ENCODE measurements at regions of chr7 and their contacts with region 1.

Region 1: DNA sequence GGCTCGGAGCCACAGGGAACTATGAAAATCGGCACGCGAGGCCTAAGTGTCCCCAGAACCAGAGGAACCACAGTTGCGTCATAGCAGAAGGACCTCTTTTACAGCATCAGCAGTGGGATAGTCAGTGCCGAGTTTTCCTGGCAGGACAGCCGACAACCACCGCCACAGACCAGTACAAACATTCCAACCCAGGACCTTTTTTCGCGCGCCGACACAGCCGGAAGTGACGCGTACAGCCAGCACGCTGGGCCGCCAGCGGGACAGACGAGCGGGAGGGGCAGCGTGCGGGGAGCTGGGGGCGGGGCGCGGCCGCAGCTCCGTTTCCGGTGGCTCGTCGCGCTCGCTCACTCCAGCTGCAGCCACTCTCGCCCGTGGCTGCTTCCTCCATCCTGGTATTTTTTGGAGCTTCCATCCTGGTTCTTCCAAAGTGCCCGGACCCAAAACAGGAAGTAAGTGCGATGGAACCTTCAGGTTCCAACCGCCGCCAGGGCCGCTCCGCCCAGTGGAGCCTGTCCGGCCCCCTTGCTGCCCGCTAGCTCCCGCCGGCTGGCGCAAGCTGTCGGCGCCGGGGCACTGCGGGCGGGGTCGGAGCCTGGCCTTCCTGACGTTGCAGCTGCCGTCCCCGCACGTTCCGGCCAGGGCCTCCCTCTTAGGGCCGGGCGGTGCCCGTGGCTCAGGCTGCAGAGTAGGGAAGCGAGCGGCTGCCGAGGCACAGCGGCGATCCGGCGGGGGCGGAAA is at the start of gene DMTF1:
- DNase-seq: peak; percentile 92
- H3K4me3 Mint-ChIP-seq: peak within 1 kb of the TSS; percentile 91
- H3K27ac Mint-ChIP-seq: peak within 1 kb of the TSS; percentile 96
- H3K4me1 Mint-ChIP-seq: peaks cover 42% of the 10 kb centered on the region
- H3K27me3 Mint-ChIP-seq: no peaks in the 10 kb centered on the region
- total RNA-seq, gene DMTF1: 62.7 to 71.1 TPM

Region 2: GRCh38 chr7:86926732-86927131 is 225.5 kb before region 1 on chr7:
- CTCF ChIA-PET with region 1: interaction called, 56 read pairs
- POLR2A ChIA-PET with region 1: no interaction called
- intact Hi-C with region 1: loop called (anchors 2 kb)
- DNase-seq: no peak
- H3K4me3 Mint-ChIP-seq: no peak overlapping the region
- H3K27ac Mint-ChIP-seq: no peak overlapping the region
- H3K4me1 Mint-ChIP-seq: peaks cover 4% of the 10 kb centered on the region
- H3K27me3 Mint-ChIP-seq: no peaks in the 10 kb centered on the region

Region 3: GRCh38 chr7:86978808-86979506 is 173.3 kb before region 1 on chr7:
- CTCF ChIA-PET with region 1: interaction called, 4 read pairs
- POLR2A ChIA-PET with region 1: interaction called, 3 read pairs
- intact Hi-C with region 1: loop called (anchors 1 kb)
- DNase-seq: no peak
- H3K4me3 Mint-ChIP-seq: no peak overlapping the region
- H3K27ac Mint-ChIP-seq: no peak overlapping the region
- H3K4me1 Mint-ChIP-seq: peaks cover 41% of the 10 kb centered on the region
- H3K27me3 Mint-ChIP-seq: no peaks in the 10 kb centered on the region

Region 4: GRCh38 chr7:87129848-87130247 is 22.4 kb before region 1 on chr7:
- CTCF ChIA-PET with region 1: no interaction called
- POLR2A ChIA-PET with region 1: no interaction called
- intact Hi-C with region 1: no loop called
- DNase-seq: no peak
- H3K4me3 Mint-ChIP-seq: no peak overlapping the region
- H3K27ac Mint-ChIP-seq: no peak overlapping the region
- H3K4me1 Mint-ChIP-seq: no peaks in the 10 kb centered on the region
- H3K27me3 Mint-ChIP-seq: peaks cover 2% of the 10 kb centered on the region

Region 5: GRCh38 chr7:87188930-87189329 is 36.7 kb after region 1 on chr7:
- CTCF ChIA-PET with region 1: no interaction called
- POLR2A ChIA-PET with region 1: no interaction called
- intact Hi-C with region 1: loop called (anchors 2 kb)
- DNase-seq: no peak
- H3K4me3 Mint-ChIP-seq: no peak overlapping the region
- H3K27ac Mint-ChIP-seq: peak overlapping the region; percentile 2
- H3K4me1 Mint-ChIP-seq: peaks cover 28% of the 10 kb centered on the region
- H3K27me3 Mint-ChIP-seq: no peaks in the 10 kb centered on the region

Region 6: DNA sequence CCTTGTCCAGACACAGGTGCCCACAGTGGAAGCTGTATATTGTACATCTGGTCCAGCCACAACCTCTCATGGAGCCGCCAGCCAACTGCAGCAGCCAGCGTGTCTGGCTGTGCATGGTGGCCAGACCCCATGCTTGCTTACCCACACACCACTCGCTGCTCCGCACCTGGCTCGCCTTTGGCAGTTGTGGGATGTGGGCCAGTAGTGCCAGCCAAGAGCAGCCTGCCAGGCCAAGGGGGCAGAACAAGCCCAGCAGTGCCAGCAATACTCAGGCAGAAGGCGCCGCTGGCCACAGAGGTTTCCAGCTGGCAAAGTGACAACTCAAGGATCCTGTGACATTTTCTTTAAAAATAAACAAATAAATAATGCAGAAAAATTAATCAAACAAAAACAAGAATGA is 79.0 kb after region 1 on chr7:
- CTCF ChIA-PET with region 1: interaction called, 18 read pairs
- POLR2A ChIA-PET with region 1: no interaction called
- intact Hi-C with region 1: loop called (anchors 2 kb)
- DNase-seq: no peak
- H3K4me3 Mint-ChIP-seq: no peak overlapping the region
- H3K27ac Mint-ChIP-seq: no peak overlapping the region
- H3K4me1 Mint-ChIP-seq: peaks cover 8% of the 10 kb centered on the region
- H3K27me3 Mint-ChIP-seq: no peaks in the 10 kb centered on the region

Region 7: DNA sequence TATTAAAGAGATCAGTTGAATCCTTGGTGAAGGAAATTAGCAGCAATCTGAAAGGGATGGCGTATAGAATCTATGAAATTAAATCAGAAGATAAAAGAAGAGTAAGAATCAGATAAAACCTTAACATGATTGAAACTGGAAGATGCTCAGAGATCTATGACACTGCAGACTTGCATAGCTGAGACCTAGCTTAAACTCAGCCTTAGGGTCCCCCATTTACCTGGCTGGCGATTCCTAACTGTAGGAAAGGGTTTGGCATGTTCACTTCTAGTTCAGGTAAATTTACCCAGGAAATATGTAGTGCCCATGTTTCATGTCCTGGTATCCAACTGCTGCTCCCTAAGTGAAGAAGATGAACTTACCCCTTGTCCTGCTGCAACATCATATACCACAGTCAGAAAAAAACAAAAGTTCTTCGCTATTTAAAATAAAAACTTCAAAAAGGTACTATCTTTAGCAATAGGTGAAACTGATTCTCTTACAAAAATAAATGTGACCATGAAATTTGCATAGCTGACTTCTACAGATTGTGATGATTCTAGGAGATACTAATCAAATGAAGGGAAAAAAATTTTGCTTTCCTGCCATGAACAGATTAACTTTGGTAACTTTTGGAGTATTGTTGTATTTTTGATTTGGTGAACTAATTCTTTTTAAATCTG is 115.1 kb after region 1 on chr7:
- CTCF ChIA-PET with region 1: no interaction called
- POLR2A ChIA-PET with region 1: no interaction called
- intact Hi-C with region 1: no loop called
- DNase-seq: no peak
- H3K4me3 Mint-ChIP-seq: no peak overlapping the region
- H3K27ac Mint-ChIP-seq: no peak overlapping the region
- H3K4me1 Mint-ChIP-seq: no peaks in the 10 kb centered on the region
- H3K27me3 Mint-ChIP-seq: peaks cover 24% of the 10 kb centered on the region

Region 8: DNA sequence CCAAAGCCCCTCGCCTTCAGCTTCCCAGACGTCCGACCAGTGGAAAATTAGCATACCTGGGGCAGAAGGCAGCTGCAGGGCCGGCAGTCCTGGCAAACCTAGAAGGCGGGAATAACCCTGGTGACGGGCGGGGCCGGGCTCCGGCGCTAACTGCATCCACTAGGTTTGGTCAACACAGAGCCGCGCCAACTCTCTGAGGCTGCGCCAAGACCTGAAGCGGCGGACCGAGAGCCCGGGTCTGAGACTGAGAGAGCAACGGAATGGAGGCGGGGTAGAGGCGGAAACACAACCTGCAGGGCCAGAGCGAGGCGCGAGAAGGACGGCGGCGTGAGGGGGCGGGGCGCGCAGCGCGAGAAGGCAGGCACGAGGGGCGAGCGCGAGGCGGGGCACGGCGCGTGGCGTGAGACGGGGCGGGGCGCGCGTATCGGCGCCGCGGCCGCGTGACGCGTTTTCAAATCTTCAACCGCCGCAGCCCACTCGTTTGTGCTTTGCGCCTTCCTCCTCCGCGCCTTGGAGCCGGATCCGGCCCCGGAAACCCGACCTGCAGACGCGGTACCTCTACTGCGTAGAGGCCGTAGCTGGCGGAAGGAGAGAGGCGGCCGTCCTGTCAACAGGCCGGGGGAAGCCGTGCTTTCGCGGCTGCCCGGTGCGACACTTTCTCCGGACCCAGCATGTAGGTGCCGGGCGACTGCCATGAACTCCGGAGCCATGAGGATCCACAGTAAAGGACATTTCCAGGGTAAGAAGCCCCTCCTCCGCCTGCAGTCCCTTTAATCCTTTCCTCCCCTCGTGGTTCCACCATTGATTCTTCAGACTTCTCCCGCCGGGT is 724.0 kb after region 1 on chr7 and contains the starts of genes DBF4 and SLC25A40:
- CTCF ChIA-PET with region 1: no interaction called
- POLR2A ChIA-PET with region 1: no interaction called
- intact Hi-C with region 1: loop called (anchors 5 kb)
- DNase-seq: peak; percentile 97
- H3K4me3 Mint-ChIP-seq: peak within 1 kb of the TSS; percentile 77
- H3K27ac Mint-ChIP-seq: peak within 1 kb of the TSS; percentile 93
- H3K4me1 Mint-ChIP-seq: peaks cover 43% of the 10 kb centered on the region
- H3K27me3 Mint-ChIP-seq: no peaks in the 10 kb centered on the region
- total RNA-seq, gene DBF4: 75.8 to 78.4 TPM
- total RNA-seq, gene SLC25A40: 47.9 to 54.9 TPM

Measured in activated CD4-positive, alpha-beta memory T cell treated with anti-CD3 and anti-CD28 coated beads for 36 hours (primary cell).